Posterior vena cava (tissue), 2 donors: ENCODE measurements at regions of chr5 and their contacts with region 1.

Region 1: GRCh38 chr5:118439831-118440230 is 548.5 kb downstream of the DTWD2 start:
- DNase-seq: no peak

Region 2: DNA sequence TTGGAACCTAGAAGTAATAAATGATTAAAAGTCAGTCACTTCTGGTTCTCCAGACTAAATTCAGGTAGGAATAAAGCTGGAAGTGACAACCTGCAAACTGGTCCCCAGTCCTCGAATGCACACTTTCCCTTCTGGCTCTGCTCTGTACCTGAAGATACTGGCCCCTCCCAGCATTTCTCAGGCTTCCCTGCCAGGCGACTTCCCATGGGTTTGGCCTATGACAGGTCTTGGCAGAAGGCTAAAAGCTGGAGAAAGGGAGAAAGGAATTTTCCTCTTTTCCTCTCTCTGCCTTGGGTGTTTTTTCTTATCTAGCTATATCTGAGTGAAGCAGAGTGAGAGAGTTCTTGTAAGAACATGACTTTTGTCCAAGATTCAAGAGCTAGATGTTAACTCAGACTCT is 457.1 kb before region 1 on chr5:
- intact Hi-C with region 1: loop called in 1 of 2 experiments (anchors 10 kb)
- DNase-seq: no peak

Region 3: GRCh38 chr5:119322948-119323537 is 883.2 kb after region 1 on chr5:
- intact Hi-C with region 1: no loop called
- DNase-seq: no peak